Activated CD4-positive, alpha-beta memory T cell treated with anti-CD3 and anti-CD28 coated beads for 36 hours (primary cell): ENCODE measurements at regions of chr15 and their contacts with region 1.

Region 1: DNA sequence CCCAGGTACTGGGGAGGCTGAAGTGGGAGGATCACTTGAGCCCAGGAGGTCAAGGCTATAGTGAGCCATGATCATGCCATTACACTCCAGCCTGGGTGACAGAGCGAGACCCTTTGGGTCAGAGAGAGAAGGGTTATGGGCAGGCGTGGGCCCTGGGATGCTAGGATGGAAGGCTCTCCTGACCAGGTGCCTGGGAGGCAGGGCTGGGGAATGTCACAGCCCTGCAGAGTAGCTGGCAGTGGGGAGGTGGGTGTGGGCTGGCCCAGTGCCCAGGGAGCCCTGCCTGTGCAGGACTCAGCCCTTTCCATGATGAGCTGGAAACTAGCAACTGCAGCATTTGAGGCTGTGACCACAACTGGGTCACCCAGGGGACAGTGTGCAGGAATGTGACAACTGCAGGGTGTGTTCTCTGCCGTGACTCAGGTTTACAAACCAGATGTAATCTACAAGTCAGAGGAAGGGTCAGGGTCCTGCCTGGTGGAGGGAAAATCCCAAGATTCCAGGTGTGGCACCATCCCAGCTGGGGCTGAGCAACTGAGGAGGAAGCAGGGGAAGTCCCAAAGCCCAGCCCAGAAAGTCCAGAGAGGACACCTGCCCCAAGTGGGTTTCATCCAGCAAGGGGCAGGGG is 45.4 kb downstream of the SLC28A1 start:
- DNase-seq: peak; percentile 46
- H3K4me3 Mint-ChIP-seq: no peak overlapping the region
- H3K27ac Mint-ChIP-seq: peak overlapping the region; percentile 44
- H3K4me1 Mint-ChIP-seq: peaks cover 8% of the 10 kb centered on the region
- H3K27me3 Mint-ChIP-seq: peaks cover 2% of the 10 kb centered on the region

Region 2: DNA sequence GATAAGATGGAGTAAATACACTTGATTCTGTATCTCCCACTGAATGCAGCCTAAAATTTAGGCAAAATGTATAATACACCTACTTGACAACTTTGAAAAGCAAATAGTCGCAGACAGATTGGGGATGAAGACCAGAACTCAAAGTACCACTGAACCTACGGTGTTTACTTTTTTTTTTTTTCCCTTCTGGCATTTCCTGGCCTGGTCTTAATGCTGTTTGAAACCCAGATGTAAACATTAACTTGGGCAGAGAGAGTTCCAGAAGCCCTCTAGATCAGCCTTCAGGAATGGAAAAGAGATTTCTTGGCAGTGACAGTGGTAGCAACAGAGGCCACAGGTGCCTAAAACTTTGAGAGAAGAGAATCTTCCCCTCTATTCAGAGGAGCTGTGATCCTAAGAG is 84.9 kb before region 1 on chr15:
- CTCF ChIA-PET with region 1: interaction called, 6 read pairs
- POLR2A ChIA-PET with region 1: no interaction called
- intact Hi-C with region 1: loop called (anchors 1 kb)
- DNase-seq: no peak
- H3K4me3 Mint-ChIP-seq: no peak overlapping the region
- H3K27ac Mint-ChIP-seq: no peak overlapping the region
- H3K4me1 Mint-ChIP-seq: no peaks in the 10 kb centered on the region
- H3K27me3 Mint-ChIP-seq: peaks cover 5% of the 10 kb centered on the region

Region 3: GRCh38 chr15:84871428-84872305 is 58.2 kb before region 1 on chr15:
- CTCF ChIA-PET with region 1: interaction called, 12 read pairs
- POLR2A ChIA-PET with region 1: no interaction called
- intact Hi-C with region 1: loop called (anchors 5 kb)
- DNase-seq: no peak
- H3K4me3 Mint-ChIP-seq: no peak overlapping the region
- H3K27ac Mint-ChIP-seq: no peak overlapping the region
- H3K4me1 Mint-ChIP-seq: no peaks in the 10 kb centered on the region
- H3K27me3 Mint-ChIP-seq: no peaks in the 10 kb centered on the region